ENCODE measurements at regions of chr5 and their contacts with region 1.

Region 1: DNA sequence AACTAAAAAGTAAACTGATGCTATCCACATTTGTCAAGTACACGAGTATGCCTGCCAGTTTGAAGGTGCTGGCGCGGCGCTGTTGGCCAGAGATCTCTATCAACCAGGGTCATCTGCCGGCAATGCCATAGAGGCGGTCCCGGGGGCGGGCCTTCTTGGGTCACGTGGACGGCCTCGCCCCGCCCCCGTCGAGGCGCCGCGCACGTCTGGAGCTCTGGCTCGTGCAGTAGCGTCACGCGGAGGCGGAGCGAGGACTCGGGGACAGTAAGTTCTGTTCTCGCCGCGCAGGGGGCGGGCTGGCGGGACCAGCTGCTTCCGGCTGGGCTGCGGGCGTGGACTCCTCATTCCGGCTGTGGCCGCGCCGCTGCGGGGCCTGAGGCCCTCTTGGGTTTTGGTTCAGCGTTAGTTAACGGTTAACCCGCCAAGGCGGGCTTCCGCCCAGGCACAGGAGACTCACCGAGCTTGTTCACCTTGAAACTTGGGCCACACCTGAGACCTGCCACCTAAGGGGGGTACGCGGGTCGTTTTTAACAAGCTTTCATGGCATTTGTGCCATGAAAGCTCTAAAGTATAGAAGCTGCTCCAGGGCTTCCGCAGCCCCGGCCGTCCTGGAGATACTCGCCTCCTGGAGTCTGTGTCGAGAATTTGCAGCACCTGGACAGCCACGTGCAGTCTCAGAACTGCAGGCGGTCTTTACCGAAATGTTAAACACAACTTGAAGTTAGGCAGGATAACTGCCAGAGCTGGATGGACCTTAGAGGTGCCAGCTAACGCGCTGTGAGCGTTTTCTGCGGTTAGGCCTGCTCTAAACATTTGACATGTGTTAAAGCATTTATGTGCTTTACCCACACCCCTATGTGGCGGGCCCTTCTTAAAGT is at the start of gene RFESD:
- DNase-seq: peak; percentile 96
- H3K4me3 Mint-ChIP-seq: peak within 1 kb of the TSS; percentile 82
- H3K27ac Mint-ChIP-seq: peak within 1 kb of the TSS; percentile 83
- H3K4me1 Mint-ChIP-seq: peaks cover 34% of the 10 kb centered on the region
- H3K27me3 Mint-ChIP-seq: no peaks in the 10 kb centered on the region
- total RNA-seq, gene RFESD: 9.1 to 9.7 TPM

Region 2: DNA sequence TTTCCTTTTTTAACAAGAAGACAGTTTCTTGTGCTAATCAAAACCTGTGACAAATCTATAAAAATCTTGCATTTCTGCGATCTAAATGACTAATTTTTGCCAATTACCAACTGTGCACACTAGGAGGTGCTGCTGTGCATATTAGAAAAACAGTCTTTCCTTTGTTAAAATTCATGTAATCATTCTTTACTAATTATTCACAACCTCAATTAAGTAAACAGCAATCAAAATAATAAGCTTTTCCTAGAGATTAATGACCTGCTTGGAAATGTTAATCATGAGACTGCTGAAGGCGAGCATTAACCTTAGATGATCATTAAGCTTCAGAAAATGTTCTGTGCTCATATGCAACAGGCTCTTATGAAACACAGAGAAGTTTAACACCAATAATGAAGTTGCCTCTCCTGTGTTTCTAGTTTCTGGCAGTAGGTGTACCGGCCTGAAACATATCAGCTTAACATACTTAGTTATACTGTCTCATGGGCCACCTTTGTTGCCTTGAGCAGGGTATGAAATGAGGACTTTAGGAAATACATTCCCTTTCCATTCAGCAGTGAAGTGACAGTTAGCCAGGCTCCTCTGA is 17.5 kb after region 1 on chr5:
- CTCF ChIA-PET with region 1: interaction called, 27 read pairs
- intact Hi-C with region 1: loop called (anchors 1 kb)
- DNase-seq: peak; percentile 63
- H3K4me3 Mint-ChIP-seq: no peak overlapping the region
- H3K27ac Mint-ChIP-seq: no peak overlapping the region
- H3K4me1 Mint-ChIP-seq: no peaks in the 10 kb centered on the region
- H3K27me3 Mint-ChIP-seq: no peaks in the 10 kb centered on the region

Region 3: DNA sequence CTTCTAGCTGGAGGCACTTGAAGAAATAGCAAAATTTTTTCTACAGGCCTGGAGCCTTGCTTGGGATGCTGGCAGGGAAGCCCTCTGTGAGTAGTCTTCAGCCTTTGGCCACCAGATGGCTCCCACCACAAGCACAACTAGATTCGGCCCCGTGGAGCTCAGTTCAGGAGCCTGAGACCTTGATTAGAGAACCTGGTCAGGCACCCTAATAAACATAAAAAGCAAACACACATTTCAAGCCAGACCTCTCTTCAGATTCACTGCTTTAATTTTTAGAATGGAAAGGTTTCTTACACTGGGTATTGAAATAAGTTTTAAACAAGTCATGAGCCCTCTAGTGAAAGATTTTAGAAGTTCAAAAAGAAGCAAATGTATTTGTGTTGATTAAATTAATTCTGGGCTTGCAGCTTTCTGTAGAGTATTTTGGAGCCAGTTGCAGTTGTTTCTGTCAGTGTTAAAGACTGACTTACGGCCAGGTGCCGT is 134.3 kb after region 1 on chr5:
- CTCF ChIA-PET with region 1: interaction called, 63 read pairs
- intact Hi-C with region 1: loop called (anchors 1 kb)
- DNase-seq: peak; percentile 86
- H3K4me3 Mint-ChIP-seq: peak overlapping the region; percentile 44
- H3K27ac Mint-ChIP-seq: peak overlapping the region; percentile 48
- H3K4me1 Mint-ChIP-seq: peaks cover 3% of the 10 kb centered on the region
- H3K27me3 Mint-ChIP-seq: no peaks in the 10 kb centered on the region

Region 4: GRCh38 chr5:95846554-95847260 is 199.9 kb after region 1 on chr5:
- CTCF ChIA-PET with region 1: interaction called, 61 read pairs
- intact Hi-C with region 1: loop called (anchors 1 kb)
- DNase-seq: peak; percentile 81
- H3K4me3 Mint-ChIP-seq: no peak overlapping the region
- H3K27ac Mint-ChIP-seq: no peak overlapping the region
- H3K4me1 Mint-ChIP-seq: peaks cover 9% of the 10 kb centered on the region
- H3K27me3 Mint-ChIP-seq: no peaks in the 10 kb centered on the region

Region 5: DNA sequence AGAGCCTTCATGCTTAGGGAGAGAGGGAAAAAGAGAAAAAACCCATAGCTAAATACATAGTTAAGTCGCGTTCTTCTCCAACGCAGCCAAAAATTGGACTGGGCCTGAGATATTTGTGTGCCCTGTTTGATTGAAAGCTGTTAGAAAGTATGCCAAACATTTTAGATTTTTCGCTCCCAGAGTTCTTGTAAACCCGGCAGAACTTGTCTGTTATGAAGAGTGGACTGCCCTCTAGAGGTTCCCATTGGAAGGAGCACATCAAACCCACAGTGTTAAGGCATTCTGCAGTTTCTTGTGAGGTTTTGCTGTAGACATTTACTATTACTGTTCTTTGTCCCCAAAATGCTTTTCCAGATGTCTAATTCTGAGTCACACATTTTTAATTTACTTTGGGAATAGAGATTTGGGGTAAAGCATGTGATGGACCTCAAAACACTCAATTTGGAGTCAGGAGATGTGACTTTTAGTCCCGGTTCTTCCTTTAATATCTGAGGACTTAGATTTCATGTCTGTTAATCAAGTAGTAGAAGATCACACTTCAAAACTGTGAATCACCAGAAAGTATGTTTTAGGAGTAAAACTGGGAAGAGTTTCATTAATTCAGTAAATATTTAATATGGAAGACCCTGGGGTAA is 689.7 kb after region 1 on chr5:
- CTCF ChIA-PET with region 1: no interaction called
- intact Hi-C with region 1: loop called (anchors 2 kb)
- DNase-seq: peak; percentile 81
- H3K4me3 Mint-ChIP-seq: no peak overlapping the region
- H3K27ac Mint-ChIP-seq: no peak overlapping the region
- H3K4me1 Mint-ChIP-seq: peaks cover 18% of the 10 kb centered on the region
- H3K27me3 Mint-ChIP-seq: peaks cover 16% of the 10 kb centered on the region

Region 6: GRCh38 chr5:96702503-96703383 is 1056.0 kb after region 1 on chr5:
- CTCF ChIA-PET with region 1: no interaction called
- intact Hi-C with region 1: loop called (anchors 2 kb)
- DNase-seq: peak; percentile 89
- H3K4me3 Mint-ChIP-seq: peak overlapping the region; percentile 87
- H3K27ac Mint-ChIP-seq: peak overlapping the region; percentile 88
- H3K4me1 Mint-ChIP-seq: peaks cover 47% of the 10 kb centered on the region
- H3K27me3 Mint-ChIP-seq: no peaks in the 10 kb centered on the region

Measured in activated naive CD4-positive, alpha-beta T cell treated with anti-CD3 and anti-CD28 coated beads for 36 hours (primary cell).